Posterior vena cava (tissue), 2 donors: ENCODE measurements at regions of chr16 and their contacts with region 1.

Region 1: DNA sequence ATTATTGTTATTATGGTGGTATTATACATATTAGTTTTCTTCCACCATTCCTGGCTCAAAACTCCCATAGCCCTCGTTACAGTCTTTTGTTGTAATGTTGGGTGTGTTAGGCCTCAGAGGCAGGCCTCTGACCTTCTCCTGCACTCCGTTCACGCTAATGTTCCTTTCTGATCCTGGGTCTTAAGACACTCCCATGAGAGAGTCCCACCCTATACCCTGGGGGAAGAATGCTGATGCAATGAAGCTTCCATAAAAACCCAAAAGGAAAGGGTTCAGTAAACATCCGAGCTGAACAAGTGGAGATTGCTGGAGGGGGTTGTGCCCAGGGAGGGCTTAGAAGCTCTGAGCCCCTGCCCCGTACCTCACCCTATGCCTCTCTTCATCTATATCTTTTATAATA is 141.3 kb upstream of the NETO2 start:
- DNase-seq: no peak

Region 2: DNA sequence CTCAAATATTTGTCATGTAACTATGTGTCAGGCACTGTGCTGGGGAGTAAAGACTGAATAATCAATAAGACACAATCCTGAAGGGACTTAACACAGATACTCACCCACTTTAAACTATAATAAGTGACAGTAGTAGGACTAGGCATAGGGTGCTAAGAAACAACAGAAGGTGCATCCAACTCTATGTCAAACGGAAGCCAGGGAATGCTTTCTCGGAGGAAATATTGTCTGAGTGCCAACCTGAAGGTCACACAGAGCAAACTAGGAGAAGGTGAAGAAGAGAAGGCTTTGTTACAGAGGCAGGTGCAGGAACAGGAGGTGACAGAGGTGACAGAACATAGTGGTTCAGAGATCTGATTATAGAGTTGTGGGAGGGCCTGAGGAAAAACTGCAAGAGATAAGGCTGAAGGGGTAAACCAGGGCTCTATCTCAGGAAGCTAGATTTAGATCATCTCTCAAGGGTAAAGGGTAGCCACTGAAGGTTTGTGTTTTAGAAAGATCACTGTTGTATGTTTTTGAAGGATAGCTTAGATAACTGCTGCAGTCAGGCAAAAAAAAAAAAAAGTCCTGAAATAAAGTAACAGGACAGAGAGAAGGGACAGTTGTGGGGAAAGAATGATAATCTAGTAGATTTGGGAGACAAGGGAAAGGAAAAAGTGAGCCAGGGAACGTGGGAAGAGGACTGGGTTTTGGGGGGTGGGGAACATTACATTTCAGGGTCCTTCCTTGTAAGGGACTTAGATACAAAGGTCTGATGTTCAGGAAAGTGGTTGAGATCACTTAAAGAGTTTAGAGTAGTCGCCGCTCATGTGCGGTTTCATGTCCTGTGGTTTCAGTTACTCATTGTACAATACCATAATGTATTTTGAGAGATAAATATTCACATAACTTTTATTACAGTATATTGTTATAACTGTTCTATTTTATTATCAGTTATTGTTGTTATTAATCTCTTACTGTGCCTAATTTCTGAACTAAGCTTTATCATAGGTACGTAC is 55.6 kb before region 1 on chr16:
- intact Hi-C with region 1: loop called in 1 of 2 experiments (anchors 10 kb)
- DNase-seq: no peak

Region 3: DNA sequence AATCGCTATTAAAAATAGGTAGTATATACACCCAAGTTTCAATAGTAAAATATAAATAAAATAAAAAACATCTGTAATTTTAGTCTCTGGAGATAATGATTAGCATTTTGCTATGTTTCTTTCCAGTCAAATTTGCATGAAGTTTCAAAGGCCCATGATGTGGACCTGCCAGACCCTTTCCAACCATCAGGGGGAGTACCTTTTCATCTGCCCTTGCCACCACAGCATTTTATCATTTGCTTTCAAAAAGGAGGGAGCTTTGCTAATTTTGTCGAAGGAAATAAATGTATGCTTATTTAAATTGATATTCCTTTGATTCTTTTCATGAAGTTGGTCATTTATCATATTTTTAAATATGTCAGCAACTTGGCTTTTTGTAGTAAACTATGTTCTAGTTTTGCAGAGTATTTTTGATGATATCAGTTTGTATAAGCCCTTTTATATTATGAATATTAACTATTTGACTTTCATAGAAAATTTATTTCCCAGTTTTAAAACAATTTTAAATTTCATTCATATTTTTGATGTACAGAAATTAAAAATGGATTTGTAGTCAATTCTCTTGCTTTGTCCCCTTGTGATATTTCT is 26.0 kb before region 1 on chr16:
- intact Hi-C with region 1: no loop called
- DNase-seq: no peak

Region 4: GRCh38 chr16:47627085-47627639 is 342.2 kb after region 1 on chr16:
- intact Hi-C with region 1: no loop called
- DNase-seq: no peak